Colonic mucosa (tissue), 4 donors: ENCODE measurements at regions of chr9 and their contacts with region 1.

Region 1: DNA sequence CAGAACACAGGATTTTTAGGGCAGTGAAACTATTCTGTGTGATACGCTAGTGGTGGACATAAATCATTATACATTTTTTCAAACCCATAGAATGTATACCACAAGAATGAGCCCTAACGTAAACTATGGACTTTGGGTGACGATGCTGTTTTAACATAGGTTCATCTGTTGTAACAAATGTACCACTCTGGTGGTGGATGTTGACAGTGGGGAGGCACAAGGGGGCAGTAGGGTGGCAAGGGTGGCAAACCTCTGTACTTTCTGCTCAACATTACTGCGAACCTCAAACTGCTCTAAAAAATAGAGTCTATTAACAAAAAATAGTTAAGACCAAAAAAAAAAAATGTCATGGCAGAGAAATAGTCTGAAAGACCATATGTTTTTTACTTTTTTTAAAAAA is 9.1 kb upstream of the MVB12B start:
- DNase-seq: peak; percentile 39
- H3K4me3 ChIP-seq: no peak overlapping the region
- H3K27ac ChIP-seq: no peak overlapping the region
- H3K4me1 ChIP-seq: no peaks in the 10 kb centered on the region
- H3K27me3 ChIP-seq: no peaks in the 10 kb centered on the region
- CTCF ChIP-seq: peak; percentile 47

Region 2: DNA sequence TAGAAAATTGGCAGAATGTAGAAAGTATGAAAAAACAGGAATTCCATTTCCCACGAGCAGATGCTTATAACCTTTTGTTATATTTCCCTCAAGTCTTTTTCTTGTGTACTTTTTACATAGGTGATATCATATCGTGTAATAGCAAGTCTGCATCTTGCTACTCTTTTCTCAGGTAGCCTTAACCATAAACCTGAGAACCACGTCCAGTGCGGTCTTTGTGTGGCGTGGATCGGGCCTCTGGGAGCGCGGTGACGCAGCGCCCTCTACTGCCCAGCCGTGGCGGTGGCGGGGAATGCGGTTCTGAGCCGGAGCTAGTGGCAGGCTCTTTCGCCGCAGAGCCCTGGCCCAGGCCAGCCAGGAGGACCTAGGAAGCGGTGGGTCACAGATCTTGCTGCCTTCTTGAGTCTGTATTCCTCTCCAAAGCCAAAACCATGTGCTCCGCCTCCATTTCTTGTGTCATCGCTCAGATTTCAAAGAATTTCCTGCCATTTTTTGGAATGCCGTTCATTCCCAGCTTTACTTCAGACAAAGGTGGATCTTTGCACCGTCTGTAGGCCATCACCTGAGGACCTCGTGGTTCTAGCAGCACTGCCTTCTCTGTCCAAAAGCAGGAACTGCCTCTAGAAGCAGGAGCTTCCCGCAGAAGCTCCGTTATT is 81.0 kb after region 1 on chr9:
- intact Hi-C with region 1: loop called (anchors 5 kb)
- DNase-seq: peak; percentile 85
- H3K4me3 ChIP-seq: no peak overlapping the region
- H3K27ac ChIP-seq: no peak overlapping the region
- H3K4me1 ChIP-seq: peaks cover 5% of the 10 kb centered on the region
- H3K27me3 ChIP-seq: no peaks in the 10 kb centered on the region
- CTCF ChIP-seq: peak; percentile 97